Colonic mucosa (tissue), 4 donors: ENCODE measurements at regions of chr10 and their contacts with region 1.

Region 1: GRCh38 chr10:48363617-48364355 is 57.3 kb downstream of the MAPK8 start:
- DNase-seq: peak; percentile 33
- H3K4me3 ChIP-seq: no peak overlapping the region
- H3K27ac ChIP-seq: no peak overlapping the region
- H3K4me1 ChIP-seq: peaks cover 5% of the 10 kb centered on the region
- H3K27me3 ChIP-seq: no peaks in the 10 kb centered on the region
- CTCF ChIP-seq: peak; percentile 57

Region 2: GRCh38 chr10:48291190-48291589 is 72.6 kb before region 1 on chr10:
- intact Hi-C with region 1: no loop called
- DNase-seq: no peak
- H3K4me3 ChIP-seq: no peak overlapping the region
- H3K27ac ChIP-seq: no peak overlapping the region
- H3K4me1 ChIP-seq: no peaks in the 10 kb centered on the region
- H3K27me3 ChIP-seq: no peaks in the 10 kb centered on the region
- CTCF ChIP-seq: no peak

Region 3: GRCh38 chr10:48506147-48506917 is 142.5 kb after region 1 on chr10:
- intact Hi-C with region 1: loop called (anchors 5 kb)
- DNase-seq: peak; percentile 18
- H3K4me3 ChIP-seq: no peak overlapping the region
- H3K27ac ChIP-seq: no peak overlapping the region
- H3K4me1 ChIP-seq: no peaks in the 10 kb centered on the region
- H3K27me3 ChIP-seq: no peaks in the 10 kb centered on the region
- CTCF ChIP-seq: no peak